ENCODE measurements at regions of chr11 and their contacts with region 1.

Region 1: DNA sequence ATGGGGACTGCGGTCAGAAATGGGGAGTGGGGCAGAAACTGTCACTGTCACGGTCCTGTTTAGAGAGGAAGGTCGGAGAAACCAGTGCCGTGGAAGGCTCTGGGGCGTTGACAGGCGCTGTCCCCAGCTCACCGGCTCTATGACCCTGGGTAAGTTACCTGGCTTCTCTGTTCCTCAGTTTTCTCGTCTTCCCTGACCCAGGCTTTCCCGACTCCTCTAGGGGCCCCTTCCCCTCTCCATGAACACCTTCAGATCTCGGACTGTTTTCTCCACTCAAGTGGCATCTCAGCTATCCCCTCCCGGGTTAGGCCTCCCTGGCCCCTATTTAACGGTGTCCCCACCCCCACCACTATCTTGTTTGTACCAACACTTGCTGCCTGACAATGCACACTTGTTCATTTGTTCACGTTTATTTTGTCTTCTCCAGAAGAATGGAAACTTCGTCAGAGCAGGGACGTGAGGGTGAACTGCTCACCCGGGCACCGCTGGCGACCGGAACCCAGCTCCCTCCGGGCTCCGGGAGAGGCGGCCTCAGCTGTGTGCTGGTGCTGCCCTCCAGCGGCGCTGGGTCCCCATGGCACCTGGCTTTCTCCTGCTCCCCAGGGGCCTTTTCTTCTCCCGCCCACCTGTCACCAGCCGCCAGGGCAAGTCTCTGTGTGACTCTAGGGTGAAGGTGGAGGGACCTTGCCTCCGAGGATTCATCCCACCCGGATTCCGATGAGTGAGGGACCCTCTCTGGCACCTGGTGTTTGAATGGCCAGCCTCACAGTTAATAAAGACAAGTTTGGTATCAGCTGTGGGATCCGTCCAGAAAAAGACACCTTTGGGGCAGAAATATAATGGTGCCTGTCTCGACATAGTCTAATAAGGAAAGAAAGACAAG is 33.1 kb upstream of the SLC35C1 start:
- DNase-seq: peak; percentile 78
- H3K4me3 ChIP-seq: peak overlapping the region; percentile 39 to 54 (median 50)
- H3K27ac ChIP-seq: no peak overlapping the region
- H3K4me1 ChIP-seq: peaks cover 5% of the 10 kb centered on the region
- H3K27me3 ChIP-seq: peaks cover 0 to 1% of the 10 kb centered on the region in 2 experiments
- CTCF ChIP-seq: peak; percentile 95 to 98
- POLR2A ChIP-seq: no peak

Region 2: GRCh38 chr11:44565211-44565952 is 1206.4 kb before region 1 on chr11 and contains the start of gene CD82:
- CTCF ChIA-PET with region 1: no interaction called
- POLR2A ChIA-PET with region 1: no interaction called
- dilution Hi-C with region 1: no loop called
- intact Hi-C with region 1: no loop called
- DNase-seq: peak; percentile 99
- H3K4me3 ChIP-seq: peak within 1 kb of the TSS; percentile 25 to 42 (median 41)
- H3K27ac ChIP-seq: peak within 1 kb of the TSS; percentile 94
- H3K4me1 ChIP-seq: peaks cover 40% of the 10 kb centered on the region
- H3K27me3 ChIP-seq: no peaks in the 10 kb centered on the region
- CTCF ChIP-seq: peak; percentile 5 to 30
- POLR2A ChIP-seq: no peak
- total RNA-seq, gene CD82: 24.9 and 25.2 TPM in 2 replicates

Region 3: DNA sequence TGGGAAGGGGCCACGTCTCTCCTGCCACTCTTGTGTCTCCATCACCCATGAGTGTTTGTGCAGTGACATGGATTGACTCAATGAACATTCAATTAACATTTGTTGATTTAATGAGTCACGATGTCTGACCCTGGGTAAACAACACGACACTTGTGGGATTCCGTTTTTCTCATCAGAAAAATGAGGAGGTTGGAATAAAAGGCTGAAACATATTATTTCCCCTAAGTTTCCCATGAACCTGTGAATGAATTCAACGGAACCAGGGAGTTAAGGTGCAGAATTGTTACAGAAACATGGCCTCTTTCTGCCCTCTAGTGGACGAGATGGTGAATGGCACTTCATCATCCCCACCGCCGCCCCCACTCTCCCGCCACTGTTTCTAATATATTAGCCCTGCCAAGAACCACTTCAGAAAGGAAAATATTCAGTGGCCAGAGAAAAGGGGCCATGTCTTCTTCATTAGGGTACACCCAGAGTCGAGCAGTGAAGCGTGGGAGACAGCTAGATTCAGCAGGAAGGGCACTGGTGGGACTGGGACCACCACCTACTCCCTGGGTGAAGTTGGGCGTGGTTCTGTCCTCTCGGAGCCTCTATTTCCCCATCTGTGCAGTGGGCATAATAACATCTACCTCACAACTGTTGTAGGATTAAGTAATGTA is 439.4 kb before region 1 on chr11:
- CTCF ChIA-PET with region 1: interaction called, 195 read pairs
- POLR2A ChIA-PET with region 1: no interaction called
- dilution Hi-C with region 1: no loop called
- intact Hi-C with region 1: no loop called
- DNase-seq: peak; percentile 51
- H3K4me3 ChIP-seq: no peak overlapping the region
- H3K27ac ChIP-seq: no peak overlapping the region
- H3K4me1 ChIP-seq: peaks cover 10% of the 10 kb centered on the region
- H3K27me3 ChIP-seq: peaks cover 1% of the 10 kb centered on the region in 2 experiments
- CTCF ChIP-seq: peak; percentile 25 to 64
- POLR2A ChIP-seq: no peak

Region 4: GRCh38 chr11:45371251-45372115 is 400.3 kb before region 1 on chr11:
- CTCF ChIA-PET with region 1: interaction called, 349 read pairs
- POLR2A ChIA-PET with region 1: no interaction called
- dilution Hi-C with region 1: no loop called
- intact Hi-C with region 1: loop called (anchors 1 kb)
- DNase-seq: peak; percentile 63
- H3K4me3 ChIP-seq: no peak overlapping the region
- H3K27ac ChIP-seq: no peak overlapping the region
- H3K4me1 ChIP-seq: no peaks in the 10 kb centered on the region
- H3K27me3 ChIP-seq: peaks cover 6 to 7% of the 10 kb centered on the region in 2 experiments
- CTCF ChIP-seq: peak; percentile 94 to 96
- POLR2A ChIP-seq: no peak

Region 5: DNA sequence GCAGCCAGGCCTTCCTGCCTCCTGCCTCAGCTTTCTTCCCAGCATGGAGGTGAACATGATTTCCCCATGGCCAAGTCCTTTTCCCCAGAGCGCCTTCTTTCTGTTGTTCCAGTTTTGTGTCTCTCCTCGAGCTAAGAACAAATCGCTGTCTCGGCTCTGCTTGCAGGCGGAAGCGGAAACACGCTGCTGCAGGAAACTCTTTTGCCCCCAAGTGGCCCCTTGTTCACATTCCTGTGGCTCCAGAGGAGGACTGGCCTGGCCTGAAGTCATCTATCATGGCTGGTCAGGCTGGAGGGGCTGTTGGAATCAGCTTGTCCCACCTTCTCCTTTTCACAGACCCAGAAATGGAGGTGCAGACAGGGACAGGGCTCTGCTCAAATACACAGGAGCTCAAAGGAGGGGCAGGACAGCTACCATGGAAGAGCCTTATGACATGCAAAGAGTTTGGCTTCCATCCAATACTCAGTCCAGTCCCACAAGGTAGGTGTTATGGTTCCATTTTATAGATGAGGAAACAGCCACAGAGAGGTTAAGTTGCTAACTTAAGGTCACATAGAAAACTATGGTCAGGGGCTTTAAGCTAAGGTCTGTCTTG is 303.4 kb before region 1 on chr11:
- CTCF ChIA-PET with region 1: interaction called, 11 read pairs
- POLR2A ChIA-PET with region 1: no interaction called
- dilution Hi-C with region 1: no loop called
- intact Hi-C with region 1: no loop called
- DNase-seq: peak; percentile 6
- H3K4me3 ChIP-seq: no peak overlapping the region
- H3K27ac ChIP-seq: no peak overlapping the region
- H3K4me1 ChIP-seq: peaks cover 6% of the 10 kb centered on the region
- H3K27me3 ChIP-seq: no peaks in the 10 kb centered on the region
- CTCF ChIP-seq: no peak
- POLR2A ChIP-seq: no peak

Region 6: DNA sequence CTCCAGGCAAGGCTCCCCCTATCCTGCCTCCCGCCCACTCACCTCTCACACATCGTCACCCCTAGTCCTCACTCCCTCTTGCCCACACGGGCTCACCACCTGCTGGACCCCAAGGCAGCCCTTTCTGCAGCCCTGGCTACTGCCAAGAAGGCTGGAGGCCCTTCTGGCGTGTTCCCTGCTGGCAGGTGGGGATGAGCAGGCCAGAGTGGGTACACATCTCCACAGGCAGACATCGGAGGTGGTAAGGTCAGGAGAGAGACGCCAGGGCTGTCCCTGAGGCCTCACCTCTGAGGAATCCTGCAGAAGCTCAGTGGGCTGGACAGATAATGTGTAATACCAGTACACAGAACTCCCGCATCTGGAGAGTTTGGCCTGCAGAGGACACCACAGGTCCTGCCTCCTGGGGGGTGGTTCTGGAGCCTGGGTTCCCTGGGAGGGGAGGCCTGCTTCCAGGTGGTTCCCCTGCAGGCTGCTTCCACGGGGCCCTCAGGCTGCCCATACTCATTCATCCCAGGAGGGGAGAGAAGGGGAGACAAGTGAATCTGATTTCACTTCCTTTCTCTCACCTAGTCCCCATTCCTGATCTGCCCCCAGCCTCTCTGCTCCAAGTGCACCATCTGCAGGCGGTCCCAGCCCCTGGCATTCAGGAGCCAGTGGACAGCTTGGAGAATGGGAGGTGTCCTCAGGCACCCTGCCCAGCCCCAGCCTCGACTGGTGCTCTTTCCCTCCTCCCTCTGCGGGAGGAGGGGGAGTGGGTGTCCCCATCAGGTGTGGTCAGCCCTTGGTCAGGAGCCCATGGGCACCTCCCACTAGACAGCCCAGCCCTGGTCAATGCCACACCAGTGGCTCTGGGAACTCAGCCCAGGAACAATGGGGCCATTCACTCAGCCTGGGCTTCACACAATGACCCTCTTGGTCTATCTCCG is 100.3 kb before region 1 on chr11:
- CTCF ChIA-PET with region 1: interaction called, 6 read pairs
- POLR2A ChIA-PET with region 1: no interaction called
- dilution Hi-C with region 1: no loop called
- intact Hi-C with region 1: loop called (anchors 1 kb)
- DNase-seq: no peak
- H3K4me3 ChIP-seq: no peak overlapping the region
- H3K27ac ChIP-seq: no peak overlapping the region
- H3K4me1 ChIP-seq: no peaks in the 10 kb centered on the region
- H3K27me3 ChIP-seq: peaks cover 0 to 4% of the 10 kb centered on the region in 2 experiments
- CTCF ChIP-seq: peak in 1 of 2 donors; percentile 19
- POLR2A ChIP-seq: no peak

Region 7: GRCh38 chr11:45798793-45799441 is 27.1 kb after region 1 on chr11:
- CTCF ChIA-PET with region 1: interaction called, 23 read pairs
- POLR2A ChIA-PET with region 1: no interaction called
- dilution Hi-C with region 1: no loop called
- intact Hi-C with region 1: no loop called
- DNase-seq: no peak
- H3K4me3 ChIP-seq: no peak overlapping the region
- H3K27ac ChIP-seq: no peak overlapping the region
- H3K4me1 ChIP-seq: peaks cover 6% of the 10 kb centered on the region
- H3K27me3 ChIP-seq: peaks cover 0 to 3% of the 10 kb centered on the region in 2 experiments
- CTCF ChIP-seq: no peak
- POLR2A ChIP-seq: no peak

Region 8: DNA sequence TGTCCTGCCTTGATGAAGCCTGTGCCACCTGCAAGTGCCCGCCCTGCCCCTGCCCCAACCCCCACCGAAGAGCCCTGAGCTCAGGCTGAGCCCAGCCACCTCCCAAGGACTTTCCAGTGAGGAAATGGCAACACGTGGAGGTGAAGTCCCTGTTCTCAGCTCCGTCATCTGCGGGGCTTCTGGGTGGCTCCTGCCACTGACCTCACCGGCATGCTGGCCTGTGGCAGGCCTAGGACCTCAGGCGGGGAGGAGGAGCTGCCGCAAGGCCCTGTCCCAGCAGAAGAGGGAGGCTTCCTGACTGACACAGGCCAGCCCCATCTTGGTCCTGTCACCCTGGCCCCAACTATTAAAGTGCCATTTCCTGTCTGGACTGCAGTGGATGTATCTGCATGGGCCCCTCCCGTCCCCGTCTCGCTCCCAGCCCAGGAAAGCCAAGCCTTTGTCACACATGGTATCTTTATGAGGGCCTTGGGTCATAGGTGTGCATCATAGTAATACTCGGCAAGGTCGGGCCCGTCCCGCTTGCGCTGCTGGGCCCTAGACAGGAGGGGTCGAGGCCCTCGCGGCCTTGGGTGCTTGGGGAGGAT is 134.4 kb after region 1 on chr11:
- CTCF ChIA-PET with region 1: no interaction called
- POLR2A ChIA-PET with region 1: no interaction called
- dilution Hi-C with region 1: no loop called
- intact Hi-C with region 1: no loop called
- DNase-seq: no peak
- H3K4me3 ChIP-seq: no peak overlapping the region
- H3K27ac ChIP-seq: no peak overlapping the region
- H3K4me1 ChIP-seq: no peaks in the 10 kb centered on the region
- H3K27me3 ChIP-seq: no peaks in the 10 kb centered on the region
- CTCF ChIP-seq: no peak
- POLR2A ChIP-seq: no peak

Measured in endothelial cell of umbilical vein (primary cell).